ENCODE measurements at regions of chr12 and their contacts with region 1.

Region 1: DNA sequence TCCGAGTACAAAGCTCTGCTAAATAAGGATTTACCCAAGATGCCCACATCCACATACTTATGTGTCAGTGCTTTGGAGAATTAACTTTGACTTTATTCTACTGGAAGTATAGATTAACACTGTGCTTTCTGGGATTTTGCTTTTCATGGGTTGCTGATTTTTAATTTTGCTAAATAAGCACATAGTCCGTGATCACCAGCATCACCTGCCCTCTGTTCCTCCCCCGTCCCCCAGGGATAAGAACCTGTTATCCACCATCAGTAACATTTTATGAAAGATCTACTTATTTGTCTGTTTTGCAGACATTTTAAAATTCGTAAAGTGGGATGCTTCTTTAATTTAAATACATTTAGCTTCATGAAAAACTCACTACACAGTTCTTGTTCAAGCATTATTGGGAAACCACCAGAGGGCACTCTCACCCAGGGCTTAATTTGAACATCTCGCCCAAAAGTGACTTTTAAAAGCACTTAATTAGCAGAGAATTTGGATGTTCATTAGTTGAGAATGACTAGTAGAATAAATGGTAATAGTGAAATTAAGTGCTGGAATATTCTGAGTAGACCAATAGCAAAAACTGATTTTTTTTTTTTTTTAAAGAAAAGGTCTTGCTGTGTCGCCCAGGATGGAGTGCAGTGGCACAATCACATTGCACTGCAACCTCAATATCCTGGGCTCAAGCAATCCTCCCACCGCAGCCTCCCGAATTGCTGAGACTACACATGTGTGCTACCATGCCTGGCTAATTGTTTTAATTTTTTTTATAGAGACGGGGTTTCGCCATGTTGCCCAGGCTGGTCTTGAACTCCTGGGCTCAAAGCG is 35.7 kb downstream of the MRPL42 start:
- DNase-seq: peak; percentile 66
- ATAC-seq: no peak

Region 2: DNA sequence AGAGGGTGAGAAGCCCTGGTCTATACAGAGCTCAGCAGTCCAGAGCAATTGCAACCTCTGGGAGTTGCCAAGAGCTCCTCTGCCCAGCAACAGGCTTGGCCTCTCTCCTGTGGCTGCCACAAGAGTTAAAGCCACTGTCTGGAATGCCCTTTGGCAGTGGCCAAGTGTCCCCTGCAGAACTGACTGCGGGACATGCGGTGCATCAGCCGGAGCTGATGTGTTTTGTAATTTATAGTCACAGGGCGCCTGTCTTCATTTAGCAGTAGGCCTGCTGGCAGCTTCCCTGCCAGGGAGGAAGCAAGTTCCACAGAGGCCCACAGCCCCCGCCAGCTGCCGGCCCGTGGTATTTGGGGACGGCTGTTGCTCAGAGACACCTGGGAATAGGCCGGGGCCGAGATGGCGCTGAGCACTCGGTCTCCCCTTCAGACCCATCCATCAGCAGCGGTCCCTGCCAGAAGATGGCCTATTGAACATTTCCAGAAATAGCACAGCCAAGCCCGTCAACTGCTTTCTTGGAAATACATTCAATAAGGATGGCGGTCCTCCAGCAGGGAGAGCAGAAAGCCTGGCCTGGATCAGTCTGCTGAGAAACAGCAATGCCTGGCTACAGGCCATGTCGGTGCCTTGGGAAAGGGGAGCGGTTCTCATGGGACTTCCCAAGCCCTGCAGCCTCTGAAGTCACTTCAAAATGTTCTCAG is 391.5 kb after region 1 on chr12:
- intact Hi-C with region 1: loop called (anchors 2 kb)
- DNase-seq: peak; percentile 82
- ATAC-seq: peak; percentile 82